Right ventricle myocardium inferior (tissue), 1 donor: ENCODE measurements at regions of chr9 and their contacts with region 1.

Region 1: DNA sequence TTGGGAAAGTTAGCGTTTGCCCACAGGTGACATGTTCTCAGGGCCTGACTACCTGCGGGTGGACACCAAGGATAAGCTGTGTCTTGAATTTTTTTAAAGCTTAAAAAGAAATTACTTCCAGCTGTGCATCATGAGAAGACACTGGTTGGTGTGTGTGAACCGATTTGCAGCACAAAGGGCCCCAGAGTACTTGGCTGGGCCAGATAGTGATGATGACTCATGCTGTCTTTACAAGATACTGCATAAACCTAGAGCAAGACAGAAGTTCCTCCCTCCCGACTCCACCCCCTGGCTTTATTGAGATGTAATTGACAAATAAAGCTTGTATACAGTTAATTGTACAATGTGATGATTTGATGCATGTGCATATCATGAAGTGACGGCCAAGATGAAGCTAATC is 212.8 kb downstream of the NXNL2 start:
- DNase-seq: no peak
- ATAC-seq: peak; percentile 73

Region 2: DNA sequence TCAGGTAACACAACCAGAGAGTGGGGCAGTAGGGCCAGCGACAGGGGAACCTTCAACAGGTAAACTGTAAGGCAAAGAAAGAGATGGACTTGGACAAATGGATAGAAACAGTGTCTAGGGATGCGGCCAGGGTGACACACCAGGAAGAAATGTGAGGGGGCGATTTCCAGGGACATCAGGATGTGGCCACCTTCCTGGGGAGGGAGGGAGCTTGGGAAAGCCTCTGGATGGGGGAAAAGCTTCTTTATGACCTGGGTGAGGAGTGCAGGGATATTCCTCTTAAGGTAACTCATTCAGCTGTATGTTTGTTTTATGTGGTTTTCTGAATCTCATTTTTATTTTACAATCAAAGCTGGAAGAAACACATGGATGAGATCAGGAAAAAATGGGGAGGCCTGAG is 224.7 kb before region 1 on chr9:
- intact Hi-C with region 1: no loop called
- DNase-seq: no peak
- ATAC-seq: no peak

Region 3: DNA sequence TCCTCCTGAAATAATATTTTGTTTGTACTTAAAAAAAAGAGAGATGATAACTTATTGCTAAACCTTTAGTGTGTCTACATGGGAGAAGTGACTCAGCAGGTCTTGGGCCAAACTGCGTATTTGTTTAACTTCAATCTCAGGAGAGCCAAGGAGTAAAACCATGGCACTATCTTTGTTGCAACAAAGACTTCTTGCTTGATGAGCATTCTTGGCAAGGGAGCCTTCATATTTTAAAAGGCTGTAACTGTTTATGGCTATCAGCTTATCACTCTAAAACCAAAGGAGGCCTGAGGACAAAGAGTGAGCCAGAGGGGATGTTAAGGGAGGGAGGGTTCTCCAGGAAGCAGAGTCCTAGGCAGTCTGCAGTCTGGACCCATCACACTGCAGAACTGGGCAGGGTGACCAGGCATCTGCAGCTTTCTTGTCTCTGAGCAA is 27.3 kb after region 1 on chr9:
- intact Hi-C with region 1: loop called (anchors 2 kb)
- DNase-seq: no peak
- ATAC-seq: peak; percentile 68